ENCODE measurements at regions of chr7 and their contacts with region 1.

Region 1: DNA sequence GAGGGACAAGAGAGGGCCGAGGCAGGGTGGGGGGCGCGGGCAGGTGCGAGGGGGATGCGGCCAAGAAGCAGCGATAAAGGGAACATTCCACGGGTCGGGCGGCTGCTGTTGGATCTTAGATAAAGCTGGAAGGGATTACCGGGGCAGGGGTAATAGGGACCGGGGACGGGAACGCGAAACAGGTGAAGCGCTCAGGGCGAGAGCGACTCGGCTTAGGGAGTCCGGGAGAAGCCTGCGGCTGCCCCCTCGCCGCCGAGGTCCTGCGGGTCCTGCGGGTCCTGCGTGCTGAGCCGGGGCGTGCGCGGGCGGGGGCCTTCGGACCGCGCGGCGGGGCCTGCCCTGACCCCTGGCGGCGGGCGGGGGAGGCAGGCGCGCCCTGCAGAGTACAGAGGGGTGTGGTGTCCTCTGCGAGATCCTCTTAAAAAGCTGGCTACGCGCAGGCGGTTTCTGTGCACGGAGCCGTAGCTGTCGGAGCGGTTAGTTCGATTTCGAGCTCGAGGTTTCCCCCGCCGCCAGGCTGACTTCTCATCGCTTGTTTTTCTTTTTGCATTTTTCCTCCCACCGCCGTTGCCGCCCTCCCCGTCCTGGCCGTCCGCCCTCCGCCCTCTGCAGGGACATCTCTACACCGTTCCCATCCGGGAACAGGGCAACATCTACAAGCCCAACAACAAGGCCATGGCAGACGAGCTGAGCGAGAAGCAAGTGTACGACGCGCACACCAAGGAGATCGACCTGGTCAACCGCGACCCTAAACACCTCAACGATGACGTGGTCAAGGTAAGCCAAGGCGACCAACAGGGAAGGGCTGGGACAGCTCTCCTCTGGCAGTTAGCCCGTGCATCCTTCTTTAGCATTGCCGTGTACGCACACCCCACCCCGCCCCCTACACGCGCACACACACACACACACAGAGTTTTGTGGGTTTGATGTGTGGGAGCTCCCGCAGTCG is 1.4 kb downstream of the CAV1 start:
- DNase-seq: peak; percentile 85
- ATAC-seq: peak; percentile 60
- H3K4me3 ChIP-seq: peak overlapping the region; percentile 97
- H3K27ac ChIP-seq: peak overlapping the region; percentile 74
- H3K4me1 ChIP-seq: peaks cover 72% of the 10 kb centered on the region
- H3K27me3 ChIP-seq: no peaks in the 10 kb centered on the region
- CTCF ChIP-seq: peak; percentile 75

Region 2: DNA sequence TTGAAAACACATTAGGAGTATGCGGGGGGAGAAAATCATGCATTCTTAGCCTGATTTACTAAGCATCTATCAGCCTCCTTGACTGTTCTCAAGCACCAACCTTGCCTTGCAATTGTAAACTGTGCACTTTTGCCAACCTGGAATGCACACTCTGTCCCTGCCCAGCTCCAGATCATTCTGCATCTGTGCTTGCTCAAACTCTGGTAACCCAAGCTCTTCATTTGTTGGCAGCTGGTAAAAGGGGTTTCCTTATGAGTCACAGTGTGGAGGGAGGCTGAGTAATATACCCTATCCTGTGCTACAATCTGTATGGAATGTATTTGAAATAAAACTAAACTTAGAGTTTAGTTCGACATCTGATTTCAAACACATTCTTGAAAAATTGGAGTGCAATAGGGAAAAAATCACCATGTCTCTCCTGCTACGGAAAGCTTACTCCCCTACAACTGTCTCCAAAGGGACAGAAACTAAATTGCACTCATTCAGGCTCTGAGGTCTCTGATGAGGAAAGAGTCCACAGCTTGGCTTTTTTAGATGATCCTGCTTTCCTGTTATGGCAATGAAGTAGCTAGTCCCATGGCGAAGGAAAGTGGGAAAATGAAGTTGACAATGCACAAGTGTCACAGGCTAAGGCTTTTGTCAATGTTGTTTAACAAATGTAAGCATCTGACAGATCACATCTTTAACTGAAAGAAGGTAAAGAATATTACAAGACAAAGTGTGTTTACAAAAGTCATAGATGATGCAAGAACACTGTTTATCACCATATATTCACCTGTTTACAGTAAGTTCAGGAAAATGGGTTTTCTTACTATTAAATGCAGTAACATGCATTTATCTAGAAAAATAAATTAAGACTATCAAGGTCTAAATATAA is 254.0 kb before region 1 on chr7:
- CTCF ChIA-PET with region 1: interaction called, 6 read pairs
- POLR2A ChIA-PET with region 1: interaction called, 3 read pairs
- intact Hi-C with region 1: loop called (anchors 1 kb)
- DNase-seq: peak; percentile 96
- ATAC-seq: peak; percentile 90
- H3K4me3 ChIP-seq: peak overlapping the region; percentile 59
- H3K27ac ChIP-seq: peak overlapping the region; percentile 96
- H3K4me1 ChIP-seq: peaks cover 50% of the 10 kb centered on the region
- H3K27me3 ChIP-seq: no peaks in the 10 kb centered on the region
- CTCF ChIP-seq: no peak

Region 3: GRCh38 chr7:116443101-116443523 is 83.1 kb before region 1 on chr7:
- CTCF ChIA-PET with region 1: interaction called, 11 read pairs
- POLR2A ChIA-PET with region 1: interaction called, 5 read pairs
- intact Hi-C with region 1: loop called (anchors 1 kb)
- DNase-seq: peak; percentile 98
- ATAC-seq: peak; percentile 73
- H3K4me3 ChIP-seq: no peak overlapping the region
- H3K27ac ChIP-seq: peak overlapping the region; percentile 91
- H3K4me1 ChIP-seq: peaks cover 57% of the 10 kb centered on the region
- H3K27me3 ChIP-seq: no peaks in the 10 kb centered on the region
- CTCF ChIP-seq: no peak

Region 4: GRCh38 chr7:116499168-116500077 is 26.8 kb before region 1 on chr7 and contains the start of gene CAV2:
- CTCF ChIA-PET with region 1: interaction called, 5 read pairs
- POLR2A ChIA-PET with region 1: interaction called, 10 read pairs
- intact Hi-C with region 1: loop called (anchors 1 kb)
- DNase-seq: peak; percentile 92
- ATAC-seq: peak; percentile 79
- H3K4me3 ChIP-seq: peak within 1 kb of the TSS; percentile 89
- H3K27ac ChIP-seq: peak within 1 kb of the TSS; percentile 79
- H3K4me1 ChIP-seq: peaks cover 37% of the 10 kb centered on the region
- H3K27me3 ChIP-seq: no peaks in the 10 kb centered on the region
- CTCF ChIP-seq: no peak
- total RNA-seq, gene CAV2: 76.6 and 84.4 TPM in 2 replicates

Region 5: GRCh38 chr7:116588641-116589594 is 62.7 kb after region 1 on chr7:
- CTCF ChIA-PET with region 1: interaction called, 34 read pairs
- POLR2A ChIA-PET with region 1: interaction called, 41 read pairs
- intact Hi-C with region 1: loop called (anchors 1 kb)
- DNase-seq: peak; percentile 88
- ATAC-seq: peak; percentile 49
- H3K4me3 ChIP-seq: no peak overlapping the region
- H3K27ac ChIP-seq: peak overlapping the region; percentile 3; the same call in 1 of the 2 replicates
- H3K4me1 ChIP-seq: peaks cover 26% of the 10 kb centered on the region
- H3K27me3 ChIP-seq: no peaks in the 10 kb centered on the region
- CTCF ChIP-seq: peak; percentile 87

Measured in PC-3 (cell line).